B cell (primary cell): ENCODE measurements at regions of chr16 and their contacts with region 1.

Region 1: GRCh38 chr16:48365581-48366164 is 19.5 kb downstream of the SIAH1 start:
- DNase-seq: peak; percentile 78
- ATAC-seq: peak; percentile 96
- H3K4me3 ChIP-seq: peak overlapping the region; percentile 58 to 96 (median 79)
- H3K4me3 Mint-ChIP-seq: peak overlapping the region; percentile 90
- H3K27ac ChIP-seq: peak overlapping the region; percentile 80 to 92
- H3K27ac Mint-ChIP-seq: peak overlapping the region; percentile 83
- H3K4me1 ChIP-seq: peaks cover 22 to 24% of the 10 kb centered on the region in 2 donors
- H3K4me1 Mint-ChIP-seq: peaks cover 60% of the 10 kb centered on the region
- H3K27me3 ChIP-seq: no peaks in the 10 kb centered on the region
- H3K27me3 Mint-ChIP-seq: no peaks in the 10 kb centered on the region
- CTCF ChIP-seq: no peak

Region 2: GRCh38 chr16:46621006-46621933 is 1744.4 kb before region 1 on chr16 and contains the start of gene SHCBP1:
- CTCF ChIA-PET with region 1: no interaction called
- POLR2A ChIA-PET with region 1: no interaction called
- intact Hi-C with region 1: loop called (anchors 5 kb)
- DNase-seq: peak; percentile 78
- ATAC-seq: peak; percentile 94
- H3K4me3 ChIP-seq: peak within 1 kb of the TSS; percentile 54 to 78 (median 70)
- H3K4me3 Mint-ChIP-seq: peak within 1 kb of the TSS; percentile 97
- H3K27ac ChIP-seq: peak within 1 kb of the TSS; percentile 39 to 48
- H3K27ac Mint-ChIP-seq: peak within 1 kb of the TSS; percentile 73
- H3K4me1 ChIP-seq: peaks cover 15 to 16% of the 10 kb centered on the region in 2 donors
- H3K4me1 Mint-ChIP-seq: peaks cover 28% of the 10 kb centered on the region
- H3K27me3 ChIP-seq: no peaks in the 10 kb centered on the region
- H3K27me3 Mint-ChIP-seq: no peaks in the 10 kb centered on the region
- CTCF ChIP-seq: no peak
- total RNA-seq, gene SHCBP1: 1.7 and 4.2 TPM in 2 replicates

Region 3: DNA sequence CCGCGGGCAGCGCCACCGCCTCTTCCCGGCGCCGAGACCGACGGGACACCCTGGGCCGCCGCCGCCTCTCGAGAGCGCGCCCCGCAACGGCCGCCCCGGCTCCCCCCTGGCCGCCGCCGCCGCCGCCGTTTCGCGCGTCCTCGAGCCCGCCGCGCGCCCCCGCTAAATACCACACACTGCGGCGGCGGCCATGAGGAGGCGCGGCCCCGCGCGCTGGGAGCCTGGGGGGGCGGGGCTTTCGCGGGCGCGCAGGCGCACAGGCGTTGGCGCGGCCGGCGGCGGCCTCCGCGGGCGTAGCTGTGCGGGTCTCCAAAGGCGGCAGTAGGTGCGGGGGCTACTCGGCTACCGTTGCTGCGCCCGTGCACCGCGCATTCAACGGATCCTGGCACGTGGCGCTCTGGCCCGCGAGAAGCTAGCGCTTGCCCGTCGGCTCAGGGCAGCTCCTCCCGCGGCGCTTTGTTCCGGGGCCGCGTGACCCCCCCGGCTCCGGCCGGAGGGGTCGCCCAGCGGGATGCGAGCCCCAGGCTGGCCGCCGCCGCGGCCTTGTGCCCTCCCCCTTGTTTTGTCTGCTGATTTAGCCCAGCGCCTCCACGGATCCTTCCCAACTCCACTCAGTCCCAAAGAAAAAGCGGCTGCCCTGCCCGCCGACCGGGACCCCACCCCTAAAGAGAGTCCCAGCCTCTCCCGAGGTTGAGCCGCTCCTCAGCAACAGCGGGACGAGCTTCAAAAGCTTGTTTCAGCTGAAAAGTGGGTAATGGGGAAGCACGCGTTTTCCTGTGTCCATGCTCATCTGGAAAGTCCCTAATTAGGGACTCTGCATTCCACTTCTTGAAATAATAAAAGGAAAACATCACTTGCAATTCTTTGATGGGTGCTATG is 19.8 kb after region 1 on chr16 and contains the start of gene SIAH1:
- CTCF ChIA-PET with region 1: interaction called, 3 read pairs
- POLR2A ChIA-PET with region 1: interaction called, 6 read pairs
- intact Hi-C with region 1: loop called (anchors 1 kb)
- DNase-seq: peak; percentile 94
- ATAC-seq: peak; percentile 81
- H3K4me3 ChIP-seq: peak within 1 kb of the TSS; percentile 66 to 95 (median 93)
- H3K4me3 Mint-ChIP-seq: peak within 1 kb of the TSS; percentile 93
- H3K27ac ChIP-seq: peak within 1 kb of the TSS; percentile 69 to 88
- H3K27ac Mint-ChIP-seq: peak within 1 kb of the TSS; percentile 92
- H3K4me1 ChIP-seq: peaks cover 17 to 23% of the 10 kb centered on the region in 2 donors
- H3K4me1 Mint-ChIP-seq: peaks cover 25% of the 10 kb centered on the region
- H3K27me3 ChIP-seq: no peaks in the 10 kb centered on the region
- H3K27me3 Mint-ChIP-seq: no peaks in the 10 kb centered on the region
- CTCF ChIP-seq: no peak
- total RNA-seq, gene SIAH1: 47.6 and 54.7 TPM in 2 replicates

Region 4: DNA sequence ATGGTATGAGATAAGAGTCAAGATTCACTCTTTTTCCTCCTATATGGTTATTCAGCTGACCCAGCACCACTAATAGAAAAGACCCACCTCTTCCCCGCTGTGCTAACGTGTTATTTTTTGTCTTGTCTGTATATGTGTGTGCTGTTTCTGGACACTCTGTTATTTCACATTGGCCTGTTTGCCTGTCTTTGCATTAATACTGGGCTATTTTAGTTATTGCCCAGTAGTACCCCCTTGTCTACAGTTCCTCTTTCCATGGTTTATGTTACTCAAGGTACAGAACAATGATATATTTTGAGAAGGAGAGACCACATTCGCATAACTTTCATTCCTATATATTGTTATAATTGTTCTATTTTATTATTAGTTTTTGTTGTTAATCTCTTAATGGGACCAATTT is 93.5 kb after region 1 on chr16:
- CTCF ChIA-PET with region 1: no interaction called
- POLR2A ChIA-PET with region 1: interaction called, 4 read pairs
- intact Hi-C with region 1: loop called (anchors 5 kb)
- DNase-seq: no peak
- ATAC-seq: no peak
- H3K4me3 ChIP-seq: no peak overlapping the region
- H3K4me3 Mint-ChIP-seq: peak overlapping the region; percentile 7
- H3K27ac ChIP-seq: peak overlapping the region in 1 of 2 donors; percentile 46
- H3K27ac Mint-ChIP-seq: peak overlapping the region; percentile 48
- H3K4me1 ChIP-seq: peaks cover 35 to 60% of the 10 kb centered on the region in 2 donors
- H3K4me1 Mint-ChIP-seq: peaks cover 62% of the 10 kb centered on the region
- H3K27me3 ChIP-seq: no peaks in the 10 kb centered on the region
- H3K27me3 Mint-ChIP-seq: no peaks in the 10 kb centered on the region
- CTCF ChIP-seq: no peak

Region 5: DNA sequence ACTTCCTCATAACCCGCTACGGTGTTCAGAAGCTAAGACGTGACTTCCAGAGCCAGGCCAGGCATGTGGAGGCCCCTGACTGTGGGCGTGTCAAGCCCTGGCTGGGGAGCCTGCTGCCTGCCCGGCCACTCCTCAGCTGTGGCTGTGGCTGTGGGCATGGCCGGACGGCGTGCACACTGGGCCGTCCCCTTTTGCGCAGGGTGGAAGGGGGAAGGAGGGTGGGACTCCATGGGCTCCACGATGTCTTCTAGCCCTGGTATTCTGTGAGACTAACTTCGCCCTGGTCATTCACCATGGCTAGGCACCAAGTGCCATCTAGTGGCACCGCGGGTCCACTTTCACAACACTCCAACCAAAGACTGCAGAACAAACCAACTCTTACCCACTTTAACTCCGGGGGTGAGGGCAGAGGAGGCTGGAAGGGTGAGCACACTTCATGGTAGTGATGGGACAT is 176.4 kb after region 1 on chr16:
- CTCF ChIA-PET with region 1: interaction called, 10 read pairs
- POLR2A ChIA-PET with region 1: no interaction called
- intact Hi-C with region 1: no loop called
- DNase-seq: peak; percentile 62
- ATAC-seq: peak; percentile 70
- H3K4me3 ChIP-seq: no peak overlapping the region
- H3K4me3 Mint-ChIP-seq: no peak overlapping the region
- H3K27ac ChIP-seq: no peak overlapping the region
- H3K27ac Mint-ChIP-seq: peak overlapping the region; percentile 32
- H3K4me1 ChIP-seq: peaks cover 5 to 6% of the 10 kb centered on the region in 2 donors
- H3K4me1 Mint-ChIP-seq: peaks cover 6% of the 10 kb centered on the region
- H3K27me3 ChIP-seq: no peaks in the 10 kb centered on the region
- H3K27me3 Mint-ChIP-seq: no peaks in the 10 kb centered on the region
- CTCF ChIP-seq: peak; percentile 73

Region 6: DNA sequence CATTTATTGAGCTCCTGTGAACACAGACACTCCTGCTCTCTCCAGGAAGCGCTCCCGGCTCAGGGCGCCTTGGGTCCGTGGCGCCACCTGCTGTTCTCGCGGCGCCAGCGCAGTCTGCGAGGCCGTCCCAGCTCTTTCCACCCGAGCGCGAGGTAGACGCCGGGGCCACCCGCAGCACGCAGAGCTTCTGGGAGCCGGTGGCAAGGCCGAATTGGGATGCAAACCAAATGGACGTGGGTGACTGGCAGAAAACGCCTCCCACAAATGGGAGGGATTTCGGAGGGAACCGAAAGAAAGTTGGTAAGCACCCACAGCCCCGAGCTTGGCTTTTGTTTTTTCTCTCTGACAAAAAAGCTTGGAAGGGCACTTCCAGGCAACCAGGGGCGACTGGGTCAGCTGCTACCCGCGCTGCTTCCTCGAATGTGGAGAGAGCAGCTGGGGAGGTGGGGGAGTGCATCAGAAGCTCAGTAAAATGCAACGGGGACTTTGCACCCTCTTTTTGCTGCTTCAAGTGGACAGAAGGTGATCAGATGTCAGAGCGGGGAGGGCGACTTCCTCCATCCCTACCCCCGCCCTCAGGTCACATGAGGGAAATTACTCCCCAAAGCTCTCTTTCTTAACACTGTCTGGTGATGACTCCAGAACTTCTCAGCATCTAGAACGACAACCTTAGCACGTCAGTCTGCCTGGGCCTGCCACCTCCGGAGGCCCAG is 257.8 kb after region 1 on chr16:
- CTCF ChIA-PET with region 1: interaction called, 11 read pairs
- POLR2A ChIA-PET with region 1: no interaction called
- intact Hi-C with region 1: no loop called
- DNase-seq: peak; percentile 83
- ATAC-seq: peak; percentile 98
- H3K4me3 ChIP-seq: peak overlapping the region; percentile 39 to 62 (median 59)
- H3K4me3 Mint-ChIP-seq: peak overlapping the region; percentile 85
- H3K27ac ChIP-seq: no peak overlapping the region
- H3K27ac Mint-ChIP-seq: no peak overlapping the region
- H3K4me1 ChIP-seq: peaks cover 14 to 28% of the 10 kb centered on the region in 2 donors
- H3K4me1 Mint-ChIP-seq: peaks cover 22% of the 10 kb centered on the region
- H3K27me3 ChIP-seq: peaks cover 0 to 3% (median 0%) of the 10 kb centered on the region in 4 experiments
- H3K27me3 Mint-ChIP-seq: peaks cover 4% of the 10 kb centered on the region
- CTCF ChIP-seq: peak; percentile 100